ENCODE measurements at regions of chr3 and their contacts with region 1.

Region 1: DNA sequence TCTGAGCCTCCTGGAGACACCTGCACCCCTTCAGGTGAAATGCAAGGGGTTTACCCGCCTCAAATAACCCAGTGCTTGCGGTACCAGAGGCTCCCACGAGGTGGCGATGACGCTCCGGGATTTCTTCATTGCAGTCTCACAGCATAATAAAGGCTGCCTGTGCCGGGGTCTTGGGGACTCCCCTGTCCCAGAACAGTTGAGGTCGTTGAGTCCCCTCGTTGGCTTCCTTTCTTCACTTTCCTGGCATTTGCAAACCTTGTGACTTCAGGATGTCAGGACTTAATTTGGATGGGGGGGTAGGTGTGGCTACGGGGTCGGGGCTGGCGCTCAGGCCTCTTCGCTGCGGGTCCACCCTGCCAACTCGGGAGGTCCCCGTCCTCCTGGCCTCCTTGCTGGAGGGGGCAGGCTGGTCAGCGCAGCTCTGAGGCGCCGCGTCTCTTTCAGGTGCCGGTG is 1.3 kb downstream of the GNAT1 start:
- DNase-seq: peak; percentile 90
- H3K4me3 Mint-ChIP-seq: no peak overlapping the region
- H3K27ac Mint-ChIP-seq: no peak overlapping the region
- H3K4me1 Mint-ChIP-seq: peaks cover 15% of the 10 kb centered on the region
- H3K27me3 Mint-ChIP-seq: peaks cover 8% of the 10 kb centered on the region

Region 2: GRCh38 chr3:50121416-50122032 is 71.2 kb before region 1 on chr3:
- CTCF ChIA-PET with region 1: interaction called, 13 read pairs
- intact Hi-C with region 1: loop called (anchors 1 kb)
- DNase-seq: peak; percentile 86
- H3K4me3 Mint-ChIP-seq: no peak overlapping the region
- H3K27ac Mint-ChIP-seq: no peak overlapping the region
- H3K4me1 Mint-ChIP-seq: no peaks in the 10 kb centered on the region
- H3K27me3 Mint-ChIP-seq: no peaks in the 10 kb centered on the region

Region 3: GRCh38 chr3:50203113-50203852 is 10.6 kb after region 1 on chr3:
- CTCF ChIA-PET with region 1: interaction called, 13 read pairs
- intact Hi-C with region 1: no loop called
- DNase-seq: no peak
- H3K4me3 Mint-ChIP-seq: no peak overlapping the region
- H3K27ac Mint-ChIP-seq: no peak overlapping the region
- H3K4me1 Mint-ChIP-seq: no peaks in the 10 kb centered on the region
- H3K27me3 Mint-ChIP-seq: peaks cover 32% of the 10 kb centered on the region

Region 4: DNA sequence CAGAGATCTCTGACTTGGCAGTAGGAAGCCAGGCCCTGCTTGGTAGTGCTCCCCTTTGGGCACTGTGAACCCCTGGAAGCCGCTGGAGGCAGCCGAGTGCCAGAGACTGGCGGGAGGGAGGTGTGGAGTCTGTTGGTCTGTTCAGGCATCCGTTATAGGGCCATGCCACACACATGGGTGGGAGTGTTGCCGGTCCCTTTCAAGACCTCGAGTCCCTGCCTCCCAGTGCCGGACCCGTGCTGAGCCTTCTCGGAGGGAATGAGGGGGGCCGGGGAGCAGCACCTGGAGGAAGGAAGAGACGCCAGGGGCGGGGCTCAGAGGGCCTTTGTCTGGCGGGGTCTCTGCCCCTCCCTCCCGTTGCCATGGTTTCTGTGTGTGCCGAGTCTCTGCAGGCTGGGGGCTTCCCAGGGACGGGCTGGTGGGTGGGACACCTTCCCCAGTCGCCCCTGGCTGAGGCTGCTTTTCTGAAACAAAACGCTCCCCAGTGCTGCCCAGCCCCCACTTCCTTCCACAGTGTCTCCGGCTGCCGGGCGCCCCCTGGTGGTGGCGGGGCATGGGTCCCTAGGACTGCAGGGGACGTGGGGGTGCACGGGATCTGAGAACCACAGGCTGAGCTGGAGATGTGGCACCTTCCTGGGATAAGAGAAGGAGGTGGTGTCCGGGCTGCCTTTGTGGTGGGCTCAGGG is 53.3 kb after region 1 on chr3:
- CTCF ChIA-PET with region 1: interaction called, 24 read pairs
- intact Hi-C with region 1: loop called (anchors 1 kb)
- DNase-seq: peak; percentile 97
- H3K4me3 Mint-ChIP-seq: peak overlapping the region; percentile 81
- H3K27ac Mint-ChIP-seq: peak overlapping the region; percentile 95
- H3K4me1 Mint-ChIP-seq: peaks cover 82% of the 10 kb centered on the region
- H3K27me3 Mint-ChIP-seq: no peaks in the 10 kb centered on the region

Region 5: DNA sequence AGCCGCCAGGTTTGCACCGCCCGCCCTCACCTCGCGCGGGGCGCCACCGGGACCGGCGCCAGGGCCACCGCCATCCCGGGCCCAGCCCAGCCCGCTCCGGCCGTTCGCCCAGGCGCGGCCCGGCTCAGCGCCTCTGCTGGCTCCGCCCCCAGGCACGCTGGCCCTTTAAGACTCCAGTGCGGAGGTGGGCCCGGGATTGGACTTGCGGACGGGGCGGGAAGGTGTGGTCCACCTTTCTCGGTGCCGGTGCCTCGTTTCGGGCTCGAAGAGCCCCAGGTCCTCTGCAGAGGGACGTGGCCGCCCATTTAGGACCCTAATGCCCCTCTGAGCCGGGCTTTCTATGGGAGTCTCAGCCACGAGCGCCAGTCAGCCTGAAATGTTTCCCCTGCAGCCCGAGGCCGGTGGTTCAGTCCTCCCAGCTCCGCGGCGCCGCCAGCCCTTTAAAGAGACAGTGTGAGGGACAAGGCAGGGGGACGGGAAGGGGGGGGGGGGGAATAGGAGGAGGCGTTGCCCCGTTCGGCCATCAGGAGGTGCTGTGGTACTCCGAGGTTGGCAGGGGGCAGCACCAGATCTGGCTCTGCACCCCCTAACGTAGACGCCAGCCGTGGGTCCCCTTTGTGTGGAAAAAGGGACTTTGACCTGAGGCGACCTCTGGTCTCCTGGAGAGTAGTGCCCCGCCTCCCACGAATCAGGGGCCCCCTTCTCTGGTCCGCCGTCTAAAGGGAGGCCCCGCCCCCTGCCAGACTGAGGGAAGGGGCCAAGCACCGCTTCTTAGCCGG is 128.8 kb after region 1 on chr3:
- CTCF ChIA-PET with region 1: interaction called, 3 read pairs
- intact Hi-C with region 1: loop called (anchors 5 kb)
- DNase-seq: peak; percentile 83
- H3K4me3 Mint-ChIP-seq: peak overlapping the region; percentile 86
- H3K27ac Mint-ChIP-seq: peak overlapping the region; percentile 80
- H3K4me1 Mint-ChIP-seq: peaks cover 38% of the 10 kb centered on the region
- H3K27me3 Mint-ChIP-seq: no peaks in the 10 kb centered on the region

Measured in activated naive CD4-positive, alpha-beta T cell treated with anti-CD3 and anti-CD28 coated beads for 36 hours (primary cell).